ENCODE measurements at regions of chr21 and their contacts with region 1.

Region 1: DNA sequence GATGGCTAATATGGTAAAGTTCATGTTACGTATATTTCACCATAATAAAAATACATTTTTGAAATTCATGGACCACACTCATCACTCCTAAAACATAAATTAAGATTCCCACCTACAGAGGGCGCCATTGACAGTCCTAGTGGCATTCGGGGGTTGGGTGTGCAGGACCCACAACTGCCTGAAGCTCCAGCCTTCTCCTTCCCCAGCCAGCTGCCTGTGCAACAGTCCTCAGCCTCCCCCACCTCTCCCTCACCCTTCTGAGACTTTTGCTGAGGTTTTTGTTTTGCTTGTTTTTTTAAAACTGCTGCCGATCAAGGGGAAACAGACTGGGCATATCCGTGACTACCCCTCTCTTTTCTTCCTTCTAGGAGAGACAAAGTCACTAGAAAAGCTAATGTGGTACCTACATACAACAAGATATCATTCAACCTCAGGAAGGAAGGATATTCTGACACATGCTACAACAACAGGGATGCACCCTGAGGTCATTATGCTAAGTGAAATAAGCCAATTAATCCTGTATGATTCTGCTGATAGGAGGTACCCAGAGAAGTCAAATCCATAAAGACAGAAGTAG is 9.2 kb upstream of the EVA1C start:
- DNase-seq: peak; percentile 73
- ATAC-seq: peak; percentile 99
- H3K4me3 ChIP-seq: no peak overlapping the region
- H3K27ac ChIP-seq: no peak overlapping the region
- H3K4me1 ChIP-seq: no peaks in the 10 kb centered on the region
- H3K27me3 ChIP-seq: peaks cover 4% of the 10 kb centered on the region
- CTCF ChIP-seq: peak; percentile 87
- POLR2A ChIP-seq: no peak
- RAD21 ChIP-seq: peak; percentile 85

Region 2: GRCh38 chr21:32562426-32562825 is 159.1 kb after region 1 on chr21:
- CTCF ChIA-PET with region 1: interaction called, 3 read pairs
- POLR2A ChIA-PET with region 1: no interaction called
- dilution Hi-C with region 1: no loop called
- in situ Hi-C with region 1: no loop called
- intact Hi-C with region 1: loop called (anchors 1 kb)
- DNase-seq: peak; percentile 83
- ATAC-seq: peak; percentile 81
- H3K4me3 ChIP-seq: no peak overlapping the region
- H3K27ac ChIP-seq: no peak overlapping the region
- H3K4me1 ChIP-seq: no peaks in the 10 kb centered on the region
- H3K27me3 ChIP-seq: no peaks in the 10 kb centered on the region
- CTCF ChIP-seq: peak; percentile 64
- POLR2A ChIP-seq: no peak
- RAD21 ChIP-seq: peak; percentile 75

Region 3: GRCh38 chr21:32569261-32570230 is 166.3 kb after region 1 on chr21:
- CTCF ChIA-PET with region 1: interaction called, 12 read pairs
- POLR2A ChIA-PET with region 1: no interaction called
- dilution Hi-C with region 1: no loop called
- in situ Hi-C with region 1: loop called (anchors 5 kb)
- intact Hi-C with region 1: loop called (anchors 1 kb)
- DNase-seq: peak; percentile 79
- ATAC-seq: peak; percentile 93
- H3K4me3 ChIP-seq: peak overlapping the region; percentile 47
- H3K27ac ChIP-seq: peak overlapping the region; percentile 58
- H3K4me1 ChIP-seq: no peaks in the 10 kb centered on the region
- H3K27me3 ChIP-seq: peaks cover 10% of the 10 kb centered on the region
- CTCF ChIP-seq: peak; percentile 82
- POLR2A ChIP-seq: no peak
- RAD21 ChIP-seq: peak; percentile 75

Region 4: DNA sequence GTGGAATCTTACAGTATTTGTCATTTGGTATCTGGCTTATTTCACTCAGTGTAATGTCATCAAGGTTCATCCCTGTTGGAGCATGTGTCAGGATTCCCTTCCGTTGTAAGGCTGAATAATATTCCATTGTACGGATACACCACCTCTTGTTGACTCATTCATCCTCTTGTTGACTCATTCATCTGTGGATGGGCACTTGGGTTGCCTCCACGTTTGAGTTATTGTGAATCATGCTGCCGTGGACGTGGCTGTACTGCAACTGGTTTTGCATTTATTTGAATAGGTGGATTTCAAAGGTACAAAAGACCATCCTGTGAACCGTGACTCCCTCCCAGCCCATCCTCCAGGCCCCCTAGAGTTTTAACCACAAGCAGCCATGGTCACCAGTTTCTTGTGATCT is 193.9 kb after region 1 on chr21:
- CTCF ChIA-PET with region 1: interaction called, 11 read pairs
- POLR2A ChIA-PET with region 1: interaction called, 8 read pairs
- dilution Hi-C with region 1: no loop called
- in situ Hi-C with region 1: loop called (anchors 5 kb)
- intact Hi-C with region 1: loop called (anchors 1 kb)
- DNase-seq: peak; percentile 95
- ATAC-seq: peak; percentile 52
- H3K4me3 ChIP-seq: no peak overlapping the region
- H3K27ac ChIP-seq: no peak overlapping the region
- H3K4me1 ChIP-seq: no peaks in the 10 kb centered on the region
- H3K27me3 ChIP-seq: no peaks in the 10 kb centered on the region
- CTCF ChIP-seq: no peak
- POLR2A ChIP-seq: no peak
- RAD21 ChIP-seq: 0 out of 2 replicates have a peak, but pooled peaks have one; percentile 6

Region 5: GRCh38 chr21:32604464-32604863 is 201.2 kb after region 1 on chr21:
- CTCF ChIA-PET with region 1: interaction called, 11 read pairs
- POLR2A ChIA-PET with region 1: interaction called, 8 read pairs
- dilution Hi-C with region 1: no loop called
- in situ Hi-C with region 1: loop called (anchors 5 kb)
- intact Hi-C with region 1: loop called (anchors 1 kb)
- DNase-seq: no peak
- ATAC-seq: no peak
- H3K4me3 ChIP-seq: no peak overlapping the region
- H3K27ac ChIP-seq: no peak overlapping the region
- H3K4me1 ChIP-seq: no peaks in the 10 kb centered on the region
- H3K27me3 ChIP-seq: no peaks in the 10 kb centered on the region
- CTCF ChIP-seq: no peak
- POLR2A ChIP-seq: no peak
- RAD21 ChIP-seq: no peak

Region 6: DNA sequence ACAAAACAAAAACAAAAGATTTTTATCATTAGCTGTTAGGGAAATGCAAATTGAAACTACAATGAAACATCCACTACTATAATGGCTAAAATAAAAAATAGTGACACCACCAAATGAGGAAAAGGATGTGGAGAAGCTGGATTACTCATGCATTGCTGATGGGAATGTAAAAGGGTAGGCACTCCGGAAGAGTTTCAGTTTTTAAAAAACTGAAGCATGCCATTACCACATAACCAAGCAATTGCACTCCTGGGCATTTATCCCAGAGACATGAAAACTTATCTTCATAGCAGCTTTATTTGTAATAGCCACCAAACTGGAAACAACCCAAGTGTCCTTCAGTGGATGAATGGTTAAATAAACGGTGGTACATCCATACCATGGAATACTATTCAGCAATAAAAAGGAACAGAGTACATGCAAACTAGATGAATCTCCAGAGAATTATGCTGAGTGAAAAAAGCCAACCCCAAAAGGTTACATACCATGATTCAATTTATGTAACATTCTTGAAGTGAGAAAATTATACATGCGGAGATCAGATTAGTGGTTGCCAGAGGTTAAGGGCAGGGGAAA is 223.4 kb after region 1 on chr21:
- CTCF ChIA-PET with region 1: no interaction called
- POLR2A ChIA-PET with region 1: interaction called, 14 read pairs
- dilution Hi-C with region 1: no loop called
- in situ Hi-C with region 1: no loop called
- intact Hi-C with region 1: no loop called
- DNase-seq: peak; percentile 82
- ATAC-seq: peak; percentile 64
- H3K4me3 ChIP-seq: no peak overlapping the region
- H3K27ac ChIP-seq: no peak overlapping the region
- H3K4me1 ChIP-seq: peaks cover 5% of the 10 kb centered on the region; the same call in 1 of the 2 replicates
- H3K27me3 ChIP-seq: 0 out of 2 replicates have a peak, but pooled peaks cover 2% of the 10 kb centered on the region
- CTCF ChIP-seq: no peak
- POLR2A ChIP-seq: no peak
- RAD21 ChIP-seq: no peak

Region 7: DNA sequence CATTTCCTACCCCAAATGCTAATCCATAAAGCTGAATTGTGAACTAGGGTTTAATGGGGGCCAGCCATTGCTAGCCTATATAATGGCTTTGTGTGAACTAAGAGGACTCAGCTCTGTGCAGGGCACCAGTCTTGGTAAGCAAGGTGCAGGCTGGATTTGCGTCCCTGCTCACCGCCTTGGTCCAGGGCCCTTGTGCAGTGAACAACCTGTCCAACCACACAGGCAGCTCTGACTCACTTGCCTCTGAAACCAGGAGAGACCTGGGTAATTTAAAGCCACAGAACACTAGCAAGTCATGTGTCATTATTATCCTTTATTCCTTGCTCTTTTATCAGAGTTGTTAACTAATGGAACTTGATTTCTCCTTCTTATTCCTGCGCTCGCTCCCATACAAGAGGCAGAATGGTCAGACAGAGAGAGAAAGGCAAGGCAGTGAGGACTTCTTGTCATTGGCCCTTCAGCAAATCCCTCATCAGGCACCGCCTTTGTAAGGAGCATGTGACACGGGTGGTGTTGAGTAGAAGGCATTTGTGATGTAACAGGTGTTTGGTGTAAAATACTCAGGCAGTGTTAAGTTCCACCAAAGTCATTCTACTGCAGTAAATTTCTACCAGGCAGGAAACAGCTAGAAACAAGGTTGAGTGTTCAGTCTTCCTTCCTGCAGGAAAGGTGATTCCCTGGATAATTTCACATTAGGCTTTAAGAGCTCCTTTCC is 555.2 kb after region 1 on chr21:
- CTCF ChIA-PET with region 1: no interaction called
- POLR2A ChIA-PET with region 1: no interaction called
- dilution Hi-C with region 1: no loop called
- in situ Hi-C with region 1: no loop called
- intact Hi-C with region 1: no loop called
- DNase-seq: no peak
- ATAC-seq: no peak
- H3K4me3 ChIP-seq: no peak overlapping the region
- H3K27ac ChIP-seq: no peak overlapping the region
- H3K4me1 ChIP-seq: no peaks in the 10 kb centered on the region
- H3K27me3 ChIP-seq: peaks cover 35% of the 10 kb centered on the region
- CTCF ChIP-seq: no peak
- POLR2A ChIP-seq: no peak
- RAD21 ChIP-seq: no peak

Region 8: GRCh38 chr21:33069976-33070811 is 666.9 kb after region 1 on chr21 and contains the start of gene OLIG1:
- CTCF ChIA-PET with region 1: no interaction called
- POLR2A ChIA-PET with region 1: no interaction called
- dilution Hi-C with region 1: no loop called
- in situ Hi-C with region 1: no loop called
- intact Hi-C with region 1: no loop called
- DNase-seq: peak; percentile 10
- ATAC-seq: peak; percentile 27
- H3K4me3 ChIP-seq: no peak within 1 kb of the TSS
- H3K27ac ChIP-seq: no peak within 1 kb of the TSS
- H3K4me1 ChIP-seq: peaks cover 2% of the 10 kb centered on the region; the same call in 1 of the 2 replicates
- H3K27me3 ChIP-seq: peaks cover 88% of the 10 kb centered on the region
- CTCF ChIP-seq: no peak
- POLR2A ChIP-seq: no peak
- RAD21 ChIP-seq: no peak
- total RNA-seq, gene OLIG1: not detected in 2 replicates

Measured in IMR-90 (cell line).